ENCODE measurements at regions of chr5 and their contacts with region 1.

Region 1: GRCh38 chr5:32076699-32077695 is 97.1 kb downstream of the GOLPH3 start:
- DNase-seq: peak; percentile 68
- H3K4me3 ChIP-seq: no peak overlapping the region
- H3K27ac ChIP-seq: no peak overlapping the region
- H3K4me1 ChIP-seq: no peaks in the 10 kb centered on the region
- CTCF ChIP-seq: peak; percentile 99

Region 2: GRCh38 chr5:31581498-31582099 is 495.4 kb before region 1 on chr5:
- CTCF ChIA-PET with region 1: no interaction called
- POLR2A ChIA-PET with region 1: no interaction called
- intact Hi-C with region 1: loop called (anchors 5 kb)
- DNase-seq: peak; percentile 56
- H3K4me3 ChIP-seq: no peak overlapping the region
- H3K27ac ChIP-seq: no peak overlapping the region
- H3K4me1 ChIP-seq: no peaks in the 10 kb centered on the region
- CTCF ChIP-seq: peak; percentile 84

Region 3: GRCh38 chr5:31934156-31934555 is 142.8 kb before region 1 on chr5:
- CTCF ChIA-PET with region 1: interaction called, 7 read pairs
- POLR2A ChIA-PET with region 1: no interaction called
- intact Hi-C with region 1: loop called (anchors 1 kb)
- DNase-seq: no peak
- H3K4me3 ChIP-seq: no peak overlapping the region
- H3K27ac ChIP-seq: no peak overlapping the region
- H3K4me1 ChIP-seq: no peaks in the 10 kb centered on the region
- CTCF ChIP-seq: no peak

Region 4: DNA sequence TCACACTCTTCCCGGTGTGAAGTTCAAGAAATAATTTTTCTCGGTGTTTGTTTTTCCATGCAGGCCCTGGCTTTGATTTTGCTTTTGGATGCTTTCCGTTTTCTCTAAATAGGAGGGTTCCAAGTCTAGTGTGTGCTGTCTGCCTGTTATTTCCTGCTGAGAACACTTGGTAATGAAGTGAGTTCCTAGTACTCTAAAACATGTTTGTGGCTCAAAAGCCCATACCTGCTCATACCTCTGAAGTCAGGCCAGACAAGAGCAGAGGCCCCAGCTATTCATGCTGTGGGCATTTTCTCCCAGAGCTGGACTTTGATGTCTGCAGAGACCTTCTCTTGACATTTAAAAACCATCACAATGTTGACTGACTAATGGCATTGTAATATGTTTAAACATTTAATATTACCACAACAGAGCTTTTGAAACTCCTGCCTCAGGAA is 114.1 kb before region 1 on chr5:
- CTCF ChIA-PET with region 1: no interaction called
- POLR2A ChIA-PET with region 1: no interaction called
- intact Hi-C with region 1: no loop called
- DNase-seq: no peak
- H3K4me3 ChIP-seq: no peak overlapping the region
- H3K27ac ChIP-seq: no peak overlapping the region
- H3K4me1 ChIP-seq: peaks cover 8% of the 10 kb centered on the region
- CTCF ChIP-seq: no peak

Region 5: GRCh38 chr5:32014096-32014745 is 62.8 kb before region 1 on chr5:
- CTCF ChIA-PET with region 1: no interaction called
- POLR2A ChIA-PET with region 1: no interaction called
- intact Hi-C with region 1: loop called (anchors 2 kb)
- DNase-seq: peak; percentile 67
- H3K4me3 ChIP-seq: peak overlapping the region; percentile 52
- H3K27ac ChIP-seq: peak overlapping the region; percentile 87
- H3K4me1 ChIP-seq: peaks cover 76% of the 10 kb centered on the region
- CTCF ChIP-seq: no peak

Region 6: GRCh38 chr5:32264954-32265572 is 188.1 kb after region 1 on chr5:
- CTCF ChIA-PET with region 1: no interaction called
- POLR2A ChIA-PET with region 1: no interaction called
- intact Hi-C with region 1: no loop called
- DNase-seq: no peak
- H3K4me3 ChIP-seq: no peak overlapping the region
- H3K27ac ChIP-seq: no peak overlapping the region
- H3K4me1 ChIP-seq: peaks cover 5% of the 10 kb centered on the region
- CTCF ChIP-seq: no peak